Calu3 (cell line): ENCODE measurements at regions of chr2 and their contacts with region 1.

Region 1: GRCh38 chr2:219498280-219499057 is at the start of gene GMPPA:
- DNase-seq: peak; percentile 95
- H3K4me3 Mint-ChIP-seq: peak within 1 kb of the TSS; percentile 90
- H3K27ac Mint-ChIP-seq: peak within 1 kb of the TSS; percentile 97
- H3K4me1 Mint-ChIP-seq: peaks cover 23% of the 10 kb centered on the region
- H3K27me3 Mint-ChIP-seq: peaks cover 21% of the 10 kb centered on the region
- CTCF ChIP-seq: no peak
- total RNA-seq, gene GMPPA: 53.0 and 59.4 TPM in 2 replicates

Region 2: DNA sequence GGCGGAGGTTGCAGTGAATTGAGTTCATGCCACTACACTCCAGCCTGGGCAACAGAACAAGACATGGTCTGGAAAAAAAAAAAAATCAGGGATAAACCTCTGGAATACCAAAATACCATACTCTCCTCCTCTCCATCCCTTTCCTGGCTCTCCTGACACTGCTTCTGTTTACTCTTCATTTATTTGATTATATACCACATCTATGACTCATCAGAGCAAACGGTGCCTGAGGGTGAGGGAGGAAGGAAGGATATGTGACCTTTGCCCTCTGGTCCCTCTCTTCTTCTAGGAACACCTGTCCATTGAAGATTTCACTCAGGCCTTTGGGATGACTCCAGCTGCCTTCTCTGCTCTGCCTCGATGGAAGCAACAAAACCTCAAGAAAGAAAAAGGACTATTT is 1049.5 kb before region 1 on chr2:
- CTCF ChIA-PET with region 1: no interaction called
- intact Hi-C with region 1: no loop called
- DNase-seq: peak; percentile 38
- H3K4me3 Mint-ChIP-seq: peak overlapping the region; percentile 7
- H3K27ac Mint-ChIP-seq: peak overlapping the region; percentile 80
- H3K4me1 Mint-ChIP-seq: peaks cover 34% of the 10 kb centered on the region
- H3K27me3 Mint-ChIP-seq: no peaks in the 10 kb centered on the region
- CTCF ChIP-seq: no peak

Region 3: DNA sequence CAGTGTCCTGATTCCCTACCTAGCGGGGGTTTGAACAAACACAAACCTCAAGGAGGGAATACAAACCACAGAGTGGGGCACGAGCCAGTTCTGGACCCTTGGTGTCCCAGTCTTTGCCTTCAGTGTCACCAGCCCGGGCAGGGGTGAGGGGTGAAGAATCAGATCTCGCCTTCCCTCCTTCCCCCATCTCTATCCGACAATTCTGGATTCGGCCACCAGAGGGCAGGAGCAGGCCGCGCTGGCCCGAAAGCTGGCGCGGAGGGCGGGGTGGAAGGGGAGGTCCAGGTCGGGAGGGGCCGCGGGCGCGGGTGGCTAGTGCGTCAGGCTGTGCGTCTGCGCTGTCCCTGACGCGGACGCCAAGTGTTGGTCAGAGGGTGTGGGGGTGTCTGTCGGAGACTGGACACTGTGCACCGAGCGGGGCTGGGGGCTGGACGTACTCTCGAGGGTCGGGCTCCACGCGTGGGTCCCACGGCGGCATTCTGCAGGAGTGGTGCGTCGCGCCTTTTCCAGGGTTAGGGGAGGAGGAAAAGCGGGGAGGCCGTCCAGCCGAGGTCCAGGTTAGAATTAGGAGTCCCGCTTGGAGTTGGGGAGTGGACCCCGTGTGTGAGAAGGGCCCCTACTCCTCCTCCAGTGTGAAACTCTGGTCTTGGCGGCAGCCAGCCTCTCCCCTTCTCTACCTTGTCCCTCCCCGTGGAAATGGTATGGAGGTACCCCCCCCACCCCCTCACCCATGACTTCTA is 502.3 kb before region 1 on chr2:
- CTCF ChIA-PET with region 1: no interaction called
- intact Hi-C with region 1: no loop called
- DNase-seq: peak; percentile 94
- H3K4me3 Mint-ChIP-seq: peak overlapping the region; percentile 71
- H3K27ac Mint-ChIP-seq: peak overlapping the region; percentile 62
- H3K4me1 Mint-ChIP-seq: peaks cover 28% of the 10 kb centered on the region
- H3K27me3 Mint-ChIP-seq: peaks cover 85% of the 10 kb centered on the region
- CTCF ChIP-seq: peak; percentile 94

Region 4: GRCh38 chr2:219388127-219388844 is 110.2 kb before region 1 on chr2:
- CTCF ChIA-PET with region 1: interaction called, 10 read pairs
- intact Hi-C with region 1: no loop called
- DNase-seq: peak; percentile 98
- H3K4me3 Mint-ChIP-seq: peak overlapping the region; percentile 94
- H3K27ac Mint-ChIP-seq: peak overlapping the region; percentile 90
- H3K4me1 Mint-ChIP-seq: no peaks in the 10 kb centered on the region
- H3K27me3 Mint-ChIP-seq: peaks cover 3% of the 10 kb centered on the region
- CTCF ChIP-seq: peak; percentile 40

Region 5: GRCh38 chr2:219409619-219410018 is 88.8 kb before region 1 on chr2:
- CTCF ChIA-PET with region 1: no interaction called
- intact Hi-C with region 1: no loop called
- DNase-seq: no peak
- H3K4me3 Mint-ChIP-seq: no peak overlapping the region
- H3K27ac Mint-ChIP-seq: no peak overlapping the region
- H3K4me1 Mint-ChIP-seq: peaks cover 8% of the 10 kb centered on the region
- H3K27me3 Mint-ChIP-seq: peaks cover 49% of the 10 kb centered on the region
- CTCF ChIP-seq: no peak

Region 6: GRCh38 chr2:219484343-219485200 is 13.9 kb before region 1 on chr2:
- CTCF ChIA-PET with region 1: interaction called, 15 read pairs
- intact Hi-C with region 1: no loop called
- DNase-seq: no peak
- H3K4me3 Mint-ChIP-seq: peak overlapping the region; percentile 34
- H3K27ac Mint-ChIP-seq: no peak overlapping the region
- H3K4me1 Mint-ChIP-seq: peaks cover 3% of the 10 kb centered on the region
- H3K27me3 Mint-ChIP-seq: peaks cover 77% of the 10 kb centered on the region
- CTCF ChIP-seq: no peak

Region 7: DNA sequence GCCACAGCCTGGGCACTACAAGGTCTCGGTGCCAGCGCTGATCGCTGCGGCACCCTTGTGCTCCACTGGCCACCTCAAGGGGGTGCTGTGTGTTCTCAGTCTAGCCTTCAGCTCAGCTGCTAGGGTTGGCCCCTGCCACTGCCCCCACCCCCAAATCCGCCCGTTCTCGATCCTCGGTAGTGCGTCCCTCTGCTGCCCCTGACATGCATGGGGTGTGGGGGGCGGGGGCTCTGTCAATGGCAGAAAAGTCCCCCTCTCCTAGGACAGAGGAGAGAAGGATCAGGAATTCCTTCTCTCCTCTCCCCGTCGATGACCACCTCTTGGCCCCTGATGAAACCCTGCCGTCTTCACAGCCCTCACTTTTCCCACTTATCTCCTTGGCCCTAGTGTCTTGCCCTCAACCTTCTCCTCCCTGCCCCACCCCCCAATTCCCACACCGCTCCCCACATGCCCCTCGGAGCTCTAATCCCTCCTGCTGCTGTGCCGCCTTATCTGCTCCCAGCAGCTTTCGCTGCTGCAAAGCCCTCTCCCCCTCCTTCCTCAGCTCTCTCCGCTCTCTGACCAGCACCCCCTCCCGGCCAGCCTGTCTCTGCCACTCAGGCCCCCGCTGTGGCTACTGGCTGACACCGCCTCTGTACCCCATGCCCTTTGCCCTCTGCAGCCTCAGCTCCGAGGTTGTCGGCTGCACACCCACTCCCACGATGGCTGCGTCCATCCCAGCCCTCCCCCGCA is 11.5 kb after region 1 on chr2:
- CTCF ChIA-PET with region 1: interaction called, 35 read pairs
- intact Hi-C with region 1: no loop called
- DNase-seq: peak; percentile 79
- H3K4me3 Mint-ChIP-seq: peak overlapping the region; percentile 79
- H3K27ac Mint-ChIP-seq: peak overlapping the region; percentile 72
- H3K4me1 Mint-ChIP-seq: peaks cover 29% of the 10 kb centered on the region
- H3K27me3 Mint-ChIP-seq: peaks cover 59% of the 10 kb centered on the region
- CTCF ChIP-seq: peak; percentile 72

Region 8: DNA sequence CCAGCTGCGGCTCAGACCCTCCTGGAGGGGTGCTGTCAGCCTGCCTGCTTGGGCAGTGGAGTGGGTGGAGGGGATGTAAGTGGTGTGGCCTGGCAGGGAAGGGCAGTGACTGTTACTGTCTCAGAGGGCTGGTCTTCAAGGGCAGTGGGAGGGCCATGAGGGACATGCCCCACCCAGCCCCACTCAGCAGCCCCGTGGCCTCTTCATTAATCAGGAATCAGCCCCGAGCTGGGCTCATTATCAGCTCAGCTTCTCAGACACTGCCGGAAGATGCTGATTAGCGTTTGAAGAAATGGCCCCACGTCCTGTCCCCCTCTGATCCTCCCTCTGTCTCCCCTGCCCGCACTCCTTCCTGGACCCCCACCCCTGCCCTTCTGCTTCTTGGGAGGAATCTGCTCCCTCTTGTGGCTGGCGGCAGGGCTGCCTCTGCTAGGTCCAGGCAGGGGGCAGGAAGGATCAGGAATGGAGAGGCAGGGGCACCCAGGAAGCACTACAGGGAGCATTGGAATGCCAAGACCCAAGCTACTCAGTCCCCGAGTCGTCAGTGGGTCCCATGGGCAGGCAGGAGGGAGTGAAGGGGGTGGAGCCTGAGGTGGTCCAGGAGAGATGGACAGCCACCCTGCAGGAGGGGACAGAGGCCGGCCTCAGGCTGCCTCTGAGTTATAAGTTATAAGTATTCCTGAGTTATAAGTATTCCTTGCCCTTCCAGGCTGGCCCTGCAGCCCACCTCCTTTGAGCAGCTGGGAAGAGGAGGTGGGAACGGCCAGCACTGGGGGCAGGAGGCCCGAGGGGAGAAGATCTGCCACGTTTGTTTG is 22.8 kb after region 1 on chr2:
- CTCF ChIA-PET with region 1: interaction called, 10 read pairs
- intact Hi-C with region 1: loop called (anchors 1 kb)
- DNase-seq: peak; percentile 66
- H3K4me3 Mint-ChIP-seq: no peak overlapping the region
- H3K27ac Mint-ChIP-seq: no peak overlapping the region
- H3K4me1 Mint-ChIP-seq: peaks cover 14% of the 10 kb centered on the region
- H3K27me3 Mint-ChIP-seq: peaks cover 77% of the 10 kb centered on the region
- CTCF ChIP-seq: peak; percentile 91

Region 9: GRCh38 chr2:219530048-219530963 is 31.8 kb after region 1 on chr2:
- CTCF ChIA-PET with region 1: interaction called, 74 read pairs
- intact Hi-C with region 1: no loop called
- DNase-seq: peak; percentile 95
- H3K4me3 Mint-ChIP-seq: no peak overlapping the region
- H3K27ac Mint-ChIP-seq: no peak overlapping the region
- H3K4me1 Mint-ChIP-seq: peaks cover 11% of the 10 kb centered on the region
- H3K27me3 Mint-ChIP-seq: peaks cover 88% of the 10 kb centered on the region
- CTCF ChIP-seq: peak; percentile 96